ENCODE measurements at regions of chr2 and their contacts with region 1.

Region 1: DNA sequence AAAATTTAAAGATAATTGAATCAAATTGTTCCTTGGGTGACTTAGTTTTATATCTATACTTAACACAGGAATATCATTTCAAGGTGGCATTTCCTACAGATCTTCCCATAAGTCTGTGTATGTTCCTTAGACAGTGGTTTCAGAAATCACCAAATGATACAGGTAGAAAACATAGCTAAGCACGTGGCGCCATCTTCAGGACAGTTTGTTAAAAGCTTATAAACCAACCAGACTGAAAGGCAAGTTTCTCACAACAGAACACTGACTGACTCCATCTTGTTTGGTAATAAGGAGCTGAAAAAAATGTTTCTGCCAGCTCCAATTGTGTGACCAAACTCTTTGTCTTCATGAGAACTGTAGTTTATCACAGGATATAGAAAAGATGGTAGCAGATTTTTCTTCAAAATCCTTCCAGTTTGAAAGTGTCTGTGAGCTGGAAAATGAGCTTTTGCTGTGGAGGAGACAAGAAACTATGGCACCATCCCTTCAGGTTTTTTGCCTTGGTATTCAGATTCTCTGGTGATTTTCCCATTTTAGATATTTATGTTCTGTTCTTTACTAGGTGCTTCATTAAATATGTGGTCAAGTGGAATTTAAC is 34.8 kb upstream of the NEUROD1 start:
- DNase-seq: peak; percentile 78
- ATAC-seq: peak; percentile 69
- H3K4me3 ChIP-seq: no peak overlapping the region
- H3K4me3 Mint-ChIP-seq: no peak overlapping the region
- H3K27ac ChIP-seq: no peak overlapping the region
- H3K27ac Mint-ChIP-seq: no peak overlapping the region
- H3K4me1 ChIP-seq: no peaks in the 10 kb centered on the region
- H3K4me1 Mint-ChIP-seq: no peaks in the 10 kb centered on the region
- H3K27me3 ChIP-seq: no peaks in the 10 kb centered on the region
- H3K27me3 Mint-ChIP-seq: no peaks in the 10 kb centered on the region
- CTCF ChIP-seq: peak; percentile 84

Region 2: GRCh38 chr2:180125245-180125962 is 1589.7 kb before region 1 on chr2:
- CTCF ChIA-PET with region 1: interaction called, 17 read pairs
- POLR2A ChIA-PET with region 1: no interaction called
- intact Hi-C with region 1: loop called (anchors 1 kb)
- DNase-seq: peak; percentile 55
- ATAC-seq: peak; percentile 93
- H3K4me3 ChIP-seq: no peak overlapping the region
- H3K4me3 Mint-ChIP-seq: no peak overlapping the region
- H3K27ac ChIP-seq: no peak overlapping the region
- H3K27ac Mint-ChIP-seq: no peak overlapping the region
- H3K4me1 ChIP-seq: peaks cover 0 to 5% of the 10 kb centered on the region in 2 donors
- H3K4me1 Mint-ChIP-seq: peaks cover 4% of the 10 kb centered on the region
- H3K27me3 ChIP-seq: peaks cover 0 to 4% (median 0%) of the 10 kb centered on the region in 4 experiments
- H3K27me3 Mint-ChIP-seq: peaks cover 18% of the 10 kb centered on the region
- CTCF ChIP-seq: peak; percentile 66

Region 3: GRCh38 chr2:181058378-181059269 is 656.5 kb before region 1 on chr2:
- CTCF ChIA-PET with region 1: interaction called, 18 read pairs
- POLR2A ChIA-PET with region 1: no interaction called
- intact Hi-C with region 1: no loop called
- DNase-seq: peak; percentile 63
- ATAC-seq: peak; percentile 54
- H3K4me3 ChIP-seq: no peak overlapping the region
- H3K4me3 Mint-ChIP-seq: no peak overlapping the region
- H3K27ac ChIP-seq: no peak overlapping the region
- H3K27ac Mint-ChIP-seq: no peak overlapping the region
- H3K4me1 ChIP-seq: no peaks in the 10 kb centered on the region
- H3K4me1 Mint-ChIP-seq: no peaks in the 10 kb centered on the region
- H3K27me3 ChIP-seq: no peaks in the 10 kb centered on the region
- H3K27me3 Mint-ChIP-seq: no peaks in the 10 kb centered on the region
- CTCF ChIP-seq: peak; percentile 92

Region 4: DNA sequence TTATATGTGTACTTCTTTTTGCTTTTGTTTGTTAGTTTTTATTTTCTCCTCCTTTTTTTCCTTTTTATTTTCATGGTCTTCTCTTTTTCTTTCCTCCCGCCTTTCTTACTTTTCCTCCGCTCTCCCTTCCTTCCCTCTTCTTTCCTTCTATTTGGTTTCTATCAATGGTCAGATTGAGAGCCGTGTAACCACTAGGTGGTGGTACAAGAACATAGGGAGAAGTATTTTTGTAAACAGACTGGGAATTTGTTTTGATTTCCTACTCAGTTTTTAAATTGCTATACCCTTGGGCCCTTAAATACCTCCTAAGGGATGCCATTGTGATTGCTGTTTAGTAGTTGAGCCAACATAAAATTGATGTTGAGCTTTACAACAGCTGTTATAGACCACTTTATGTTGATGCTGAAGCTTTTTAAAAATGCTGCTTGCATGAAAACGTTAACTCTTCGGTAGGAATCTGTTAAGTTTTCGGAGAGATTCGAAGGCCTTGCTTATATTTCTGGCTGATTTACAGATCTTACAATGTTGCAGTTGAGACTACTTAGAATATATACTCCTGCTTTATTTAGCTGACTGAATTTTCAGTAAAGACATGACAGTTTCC is 610.5 kb before region 1 on chr2:
- CTCF ChIA-PET with region 1: interaction called, 96 read pairs
- POLR2A ChIA-PET with region 1: no interaction called
- intact Hi-C with region 1: loop called (anchors 1 kb)
- DNase-seq: peak; percentile 65
- ATAC-seq: peak; percentile 41
- H3K4me3 ChIP-seq: no peak overlapping the region
- H3K4me3 Mint-ChIP-seq: no peak overlapping the region
- H3K27ac ChIP-seq: no peak overlapping the region
- H3K27ac Mint-ChIP-seq: no peak overlapping the region
- H3K4me1 ChIP-seq: no peaks in the 10 kb centered on the region
- H3K4me1 Mint-ChIP-seq: peaks cover 2% of the 10 kb centered on the region
- H3K27me3 ChIP-seq: no peaks in the 10 kb centered on the region
- H3K27me3 Mint-ChIP-seq: no peaks in the 10 kb centered on the region
- CTCF ChIP-seq: peak; percentile 81

Region 5: GRCh38 chr2:181231886-181232621 is 483.1 kb before region 1 on chr2:
- CTCF ChIA-PET with region 1: no interaction called
- POLR2A ChIA-PET with region 1: no interaction called
- intact Hi-C with region 1: no loop called
- DNase-seq: no peak
- ATAC-seq: no peak
- H3K4me3 ChIP-seq: no peak overlapping the region
- H3K4me3 Mint-ChIP-seq: no peak overlapping the region
- H3K27ac ChIP-seq: no peak overlapping the region
- H3K27ac Mint-ChIP-seq: no peak overlapping the region
- H3K4me1 ChIP-seq: peaks cover 6 to 7% of the 10 kb centered on the region in 2 donors
- H3K4me1 Mint-ChIP-seq: peaks cover 16% of the 10 kb centered on the region
- H3K27me3 ChIP-seq: no peaks in the 10 kb centered on the region
- H3K27me3 Mint-ChIP-seq: no peaks in the 10 kb centered on the region
- CTCF ChIP-seq: no peak

Region 6: DNA sequence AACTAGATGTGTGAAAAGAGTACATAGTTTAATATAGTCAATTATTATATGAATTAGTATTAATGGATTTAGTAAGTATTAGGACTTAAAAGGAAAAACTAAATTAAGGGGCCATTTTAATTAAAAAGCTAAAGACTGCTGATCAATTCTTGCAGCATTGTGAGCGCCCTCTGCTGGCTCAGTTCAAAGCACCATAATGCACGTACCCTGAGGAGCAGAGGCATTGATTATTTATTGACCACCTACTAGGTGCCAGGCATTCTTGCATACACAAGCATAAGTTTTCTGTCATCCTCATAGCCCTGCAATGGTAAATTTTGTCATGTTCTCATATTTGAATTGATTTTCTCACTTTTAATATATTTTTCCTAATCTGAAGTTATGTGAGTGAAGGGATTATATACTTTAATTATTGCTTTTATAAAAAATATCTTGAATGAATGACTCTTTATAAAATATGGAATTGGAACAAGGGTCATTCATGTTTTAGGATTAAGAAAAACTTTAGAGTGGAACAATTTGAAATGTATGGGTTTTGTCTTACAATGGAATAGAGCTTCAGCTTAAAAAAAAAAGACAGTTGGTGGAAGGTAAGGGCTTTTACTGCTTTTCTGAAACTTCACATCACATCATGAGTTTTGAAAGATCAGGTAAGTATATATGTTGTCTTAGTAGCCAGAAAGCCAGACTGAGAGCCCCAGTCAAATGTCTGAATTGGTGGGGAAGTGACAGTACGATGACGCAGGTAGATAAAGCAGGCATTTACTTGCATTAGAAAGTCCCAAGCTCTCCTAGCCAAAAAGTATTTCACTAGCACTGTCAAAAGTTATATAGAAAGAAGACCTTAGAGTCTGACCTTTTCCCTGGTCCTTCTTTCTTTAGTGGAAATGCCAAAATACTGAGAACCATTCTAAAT is 248.2 kb before region 1 on chr2:
- CTCF ChIA-PET with region 1: interaction called, 5 read pairs
- POLR2A ChIA-PET with region 1: no interaction called
- intact Hi-C with region 1: loop called (anchors 1 kb)
- DNase-seq: peak; percentile 84
- ATAC-seq: peak; percentile 52
- H3K4me3 ChIP-seq: no peak overlapping the region
- H3K4me3 Mint-ChIP-seq: no peak overlapping the region
- H3K27ac ChIP-seq: peak overlapping the region in 1 of 2 donors; percentile 69
- H3K27ac Mint-ChIP-seq: no peak overlapping the region
- H3K4me1 ChIP-seq: peaks cover 56 to 81% of the 10 kb centered on the region in 2 donors
- H3K4me1 Mint-ChIP-seq: peaks cover 87% of the 10 kb centered on the region
- H3K27me3 ChIP-seq: no peaks in the 10 kb centered on the region
- H3K27me3 Mint-ChIP-seq: no peaks in the 10 kb centered on the region
- CTCF ChIP-seq: peak; percentile 91

Region 7: GRCh38 chr2:181698223-181698622 is 16.9 kb before region 1 on chr2:
- CTCF ChIA-PET with region 1: interaction called, 17 read pairs
- POLR2A ChIA-PET with region 1: no interaction called
- intact Hi-C with region 1: no loop called
- DNase-seq: no peak
- ATAC-seq: no peak
- H3K4me3 ChIP-seq: no peak overlapping the region
- H3K4me3 Mint-ChIP-seq: no peak overlapping the region
- H3K27ac ChIP-seq: no peak overlapping the region
- H3K27ac Mint-ChIP-seq: no peak overlapping the region
- H3K4me1 ChIP-seq: no peaks in the 10 kb centered on the region
- H3K4me1 Mint-ChIP-seq: peaks cover 6% of the 10 kb centered on the region
- H3K27me3 ChIP-seq: no peaks in the 10 kb centered on the region
- H3K27me3 Mint-ChIP-seq: peaks cover 16% of the 10 kb centered on the region
- CTCF ChIP-seq: no peak

Measured in B cell (primary cell).